PC-9 (cell line): ENCODE measurements at regions of chr16 and their contacts with region 1.

Region 1: GRCh38 chr16:67226804-67227557 is at the start of gene TMEM208:
- DNase-seq: peak; percentile 93 to 98
- H3K4me3 ChIP-seq: peak within 1 kb of the TSS; percentile 91
- H3K27ac ChIP-seq: peak within 1 kb of the TSS; percentile 20; the same call in 1 of the 2 replicates
- H3K4me1 ChIP-seq: peaks cover 15% of the 10 kb centered on the region
- H3K27me3 ChIP-seq: no peaks in the 10 kb centered on the region
- CTCF ChIP-seq: no peak; the same call in 1 of the 2 replicates
- total RNA-seq, gene TMEM208: 39.5 and 42.0 TPM in 2 replicates

Region 2: DNA sequence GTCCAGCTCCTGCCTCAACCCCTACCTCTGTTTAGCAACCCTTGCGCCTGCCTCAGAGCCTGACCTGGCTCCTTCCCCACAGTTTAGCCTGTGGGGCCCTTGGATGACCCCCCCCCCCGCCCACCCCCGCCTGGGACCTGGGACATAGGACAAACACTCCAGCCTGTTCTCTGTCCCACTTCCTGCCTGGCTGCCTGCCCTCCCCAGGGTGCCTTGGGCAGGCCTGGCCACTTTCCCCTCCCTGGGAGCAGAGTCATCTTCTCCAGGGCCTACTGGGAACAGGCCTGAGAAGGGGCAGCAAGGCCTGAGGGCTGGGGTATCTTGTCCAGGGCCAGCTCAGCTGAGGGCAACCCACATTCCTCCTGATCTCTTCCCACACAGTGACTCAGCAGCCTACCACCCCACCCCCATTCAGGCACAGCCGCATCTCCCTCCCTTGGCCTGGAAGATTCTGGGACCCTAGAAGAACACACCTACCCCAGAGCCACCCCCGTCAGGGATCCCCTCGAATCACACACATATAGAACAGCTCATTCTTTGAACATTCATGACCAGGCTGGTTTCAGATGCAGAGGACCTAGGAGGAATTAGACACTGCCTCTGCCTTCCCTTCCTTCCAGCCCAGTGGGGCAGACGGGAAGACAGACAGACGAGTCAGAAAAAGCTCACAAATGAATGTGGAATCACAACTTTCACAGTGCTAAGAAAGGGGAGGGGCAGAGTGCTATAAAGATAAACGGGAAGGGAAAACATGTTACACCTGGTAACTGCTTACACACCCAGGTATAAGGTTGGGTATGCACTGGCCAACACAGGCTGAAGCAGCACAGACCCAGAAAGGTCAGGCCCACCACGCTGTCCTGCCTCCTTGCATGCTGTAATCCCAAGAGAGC is 14.3 kb after region 1 on chr16:
- CTCF ChIA-PET with region 1: interaction called, 5 read pairs
- POLR2A ChIA-PET with region 1: interaction called, 16 read pairs
- intact Hi-C with region 1: loop called (anchors 1 kb)
- DNase-seq: peak; percentile 84 to 90
- H3K4me3 ChIP-seq: peak overlapping the region; percentile 13; the same call in 1 of the 2 replicates
- H3K27ac ChIP-seq: peak overlapping the region; percentile 84
- H3K4me1 ChIP-seq: peaks cover 64% of the 10 kb centered on the region
- H3K27me3 ChIP-seq: no peaks in the 10 kb centered on the region
- CTCF ChIP-seq: no peak

Region 3: GRCh38 chr16:67246934-67247697 is 20.1 kb after region 1 on chr16 and contains the start of gene FHOD1:
- CTCF ChIA-PET with region 1: interaction called, 5 read pairs
- POLR2A ChIA-PET with region 1: interaction called, 16 read pairs
- intact Hi-C with region 1: loop called (anchors 2 kb)
- DNase-seq: peak; percentile 84 to 98
- H3K4me3 ChIP-seq: peak within 1 kb of the TSS; percentile 90
- H3K27ac ChIP-seq: peak within 1 kb of the TSS; percentile 76
- H3K4me1 ChIP-seq: peaks cover 45% of the 10 kb centered on the region
- H3K27me3 ChIP-seq: no peaks in the 10 kb centered on the region; the same call in 1 of the 2 replicates
- CTCF ChIP-seq: 0 out of 2 replicates have a peak, but pooled peaks have one; percentile 39
- total RNA-seq, gene FHOD1: 58.2 and 60.0 TPM in 2 replicates

Region 4: GRCh38 chr16:67537636-67538591 is 310.9 kb after region 1 on chr16:
- CTCF ChIA-PET with region 1: no interaction called
- POLR2A ChIA-PET with region 1: interaction called, 11 read pairs
- intact Hi-C with region 1: no loop called
- DNase-seq: peak in 1 of 2 experiments; percentile 77
- H3K4me3 ChIP-seq: peak overlapping the region; percentile 59
- H3K27ac ChIP-seq: no peak overlapping the region
- H3K4me1 ChIP-seq: no peaks in the 10 kb centered on the region
- H3K27me3 ChIP-seq: no peaks in the 10 kb centered on the region
- CTCF ChIP-seq: no peak